Heart right ventricle (tissue), 16 donors: ENCODE measurements at regions of chrX and their contacts with region 1.

Region 1: DNA sequence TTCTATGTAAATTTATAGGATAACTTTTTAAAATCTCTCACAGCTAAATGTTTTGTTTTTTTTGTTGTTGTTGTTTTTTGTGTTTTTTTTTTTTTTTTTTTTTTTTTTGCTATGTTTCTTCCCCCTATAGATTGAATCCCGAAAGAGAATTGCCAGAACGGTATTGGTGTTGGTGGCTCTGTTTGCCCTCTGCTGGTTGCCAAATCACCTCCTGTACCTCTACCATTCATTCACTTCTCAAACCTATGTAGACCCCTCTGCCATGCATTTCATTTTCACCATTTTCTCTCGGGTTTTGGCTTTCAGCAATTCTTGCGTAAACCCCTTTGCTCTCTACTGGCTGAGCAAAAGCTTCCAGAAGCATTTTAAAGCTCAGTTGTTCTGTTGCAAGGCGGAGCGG is 4.1 kb downstream of the BRS3 start:
- DNase-seq: no peak
- ATAC-seq: no peak
- H3K4me3 ChIP-seq: no peak overlapping the region
- H3K27ac ChIP-seq: no peak overlapping the region
- H3K4me1 ChIP-seq: peaks cover 0 to 8% (median 3%) of the 10 kb centered on the region in 9 donors
- H3K27me3 ChIP-seq: peaks cover 0 to 56% (median 4%) of the 10 kb centered on the region in 7 donors
- CTCF ChIP-seq: no peak

Region 2: DNA sequence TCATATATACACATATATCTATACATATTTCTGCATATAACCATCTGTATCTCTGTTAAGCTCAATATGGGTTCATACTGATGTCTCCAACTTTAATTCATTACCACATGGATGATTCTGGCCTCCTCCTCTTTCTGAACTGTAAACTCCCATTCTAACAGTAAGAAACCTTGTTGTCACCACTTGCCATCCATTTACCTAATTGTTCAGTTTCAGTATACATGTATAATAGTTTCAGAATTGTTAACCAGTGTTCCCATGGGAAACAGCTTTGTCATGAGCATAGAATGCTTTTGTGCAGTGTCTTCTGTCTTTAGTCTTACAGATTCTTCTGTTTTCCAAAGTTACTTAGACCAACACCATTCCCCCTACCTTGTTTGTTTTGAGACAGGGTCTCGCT is 470.7 kb before region 1 on chrX:
- intact Hi-C with region 1: loop called in 1 of 10 experiments (anchors 5 kb)
- DNase-seq: no peak
- ATAC-seq: no peak
- H3K4me3 ChIP-seq: no peak overlapping the region
- H3K27ac ChIP-seq: no peak overlapping the region
- H3K4me1 ChIP-seq: no peaks in the 10 kb centered on the region
- H3K27me3 ChIP-seq: peaks cover 0 to 14% (median 0%) of the 10 kb centered on the region in 7 donors
- CTCF ChIP-seq: no peak

Region 3: DNA sequence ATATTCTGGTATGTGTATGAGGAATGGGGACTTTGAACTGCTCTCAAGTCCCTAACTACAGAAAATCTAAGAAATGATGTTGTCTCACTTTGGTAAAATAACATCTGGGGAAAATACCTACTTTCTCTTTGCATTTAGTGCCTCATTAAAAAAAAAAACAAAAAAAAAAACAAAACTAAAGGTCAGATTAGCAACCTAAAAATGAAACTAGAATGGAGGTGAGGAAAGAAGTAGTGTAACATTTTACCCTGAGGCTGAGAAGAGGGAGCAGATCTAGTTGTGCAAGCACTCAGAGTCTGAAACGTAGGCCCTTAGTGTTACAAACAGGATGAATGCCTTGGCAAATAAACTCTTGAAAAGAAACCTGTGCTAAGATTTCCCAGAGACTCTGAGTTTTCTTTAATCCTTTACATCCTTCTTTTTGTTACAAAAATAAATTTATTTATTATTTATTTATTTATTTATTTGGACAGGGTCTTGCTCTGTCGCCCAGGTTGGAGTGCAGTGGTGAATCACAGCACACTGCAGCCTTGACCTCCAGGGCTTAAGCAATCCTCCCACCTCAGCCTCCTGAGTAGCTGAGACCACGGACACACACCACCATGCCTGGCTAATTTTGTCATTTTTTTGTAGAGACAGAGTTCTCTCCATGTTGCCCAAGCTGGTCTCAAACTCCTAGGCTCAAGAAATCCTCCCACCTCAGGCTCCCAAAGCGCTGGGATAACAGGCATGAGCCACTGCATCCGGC is 96.4 kb after region 1 on chrX:
- intact Hi-C with region 1: no loop called
- DNase-seq: no peak
- ATAC-seq: no peak
- H3K4me3 ChIP-seq: no peak overlapping the region
- H3K27ac ChIP-seq: peak overlapping the region in 1 of 10 donors; percentile 26
- H3K4me1 ChIP-seq: peaks cover 0 to 8% (median 0%) of the 10 kb centered on the region in 9 donors
- H3K27me3 ChIP-seq: peaks cover 0 to 13% (median 0%) of the 10 kb centered on the region in 7 donors
- CTCF ChIP-seq: no peak

Region 4: DNA sequence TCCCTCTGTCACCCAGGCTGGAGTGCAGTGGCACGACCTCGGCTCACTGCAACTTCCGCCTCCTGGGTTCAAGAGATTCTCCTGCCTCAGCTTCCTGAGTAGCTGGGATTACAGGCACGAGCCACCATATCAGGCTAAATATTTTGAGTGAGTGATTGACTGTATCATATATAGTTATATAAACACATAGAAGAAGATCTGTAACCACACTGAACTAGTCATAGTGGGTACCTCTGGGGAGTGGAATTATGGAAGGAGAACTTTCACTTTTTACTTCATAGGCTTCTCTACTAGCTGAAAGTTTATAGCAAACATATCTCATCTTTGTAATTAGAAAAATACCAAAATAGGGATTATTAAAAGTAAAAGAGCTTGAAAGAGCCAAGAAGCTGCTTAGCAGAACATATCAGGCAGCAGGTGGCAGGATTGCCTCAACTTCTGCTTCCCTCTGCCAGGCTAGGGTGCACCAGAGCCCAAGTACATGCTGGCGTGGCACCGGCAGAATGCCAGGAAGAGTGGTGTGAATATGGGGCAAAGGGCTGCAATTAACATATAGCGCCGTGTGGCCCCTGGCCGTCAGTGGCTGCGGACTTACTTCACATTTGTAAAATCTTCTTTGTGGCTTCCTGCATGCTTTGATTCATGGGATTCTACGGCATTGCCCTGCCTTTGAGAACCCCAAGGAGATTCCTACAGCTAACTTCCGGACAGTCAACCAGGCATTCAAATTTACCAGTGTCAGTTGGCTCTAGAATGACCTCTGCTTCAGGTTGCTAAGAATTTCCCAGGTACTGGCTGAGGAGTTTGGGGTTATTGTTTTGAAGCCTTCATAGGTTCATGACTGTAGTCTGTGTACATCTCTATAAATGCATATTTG is 116.7 kb after region 1 on chrX:
- intact Hi-C with region 1: no loop called
- DNase-seq: peak; percentile 8 to 38
- ATAC-seq: peak in 1 of 8 donors; percentile 50
- H3K4me3 ChIP-seq: no peak overlapping the region
- H3K27ac ChIP-seq: no peak overlapping the region
- H3K4me1 ChIP-seq: no peaks in the 10 kb centered on the region
- H3K27me3 ChIP-seq: peaks cover 0 to 21% (median 0%) of the 10 kb centered on the region in 7 donors
- CTCF ChIP-seq: peak in 7 of 9 donors; percentile 7 to 50 (median 35)

Region 5: DNA sequence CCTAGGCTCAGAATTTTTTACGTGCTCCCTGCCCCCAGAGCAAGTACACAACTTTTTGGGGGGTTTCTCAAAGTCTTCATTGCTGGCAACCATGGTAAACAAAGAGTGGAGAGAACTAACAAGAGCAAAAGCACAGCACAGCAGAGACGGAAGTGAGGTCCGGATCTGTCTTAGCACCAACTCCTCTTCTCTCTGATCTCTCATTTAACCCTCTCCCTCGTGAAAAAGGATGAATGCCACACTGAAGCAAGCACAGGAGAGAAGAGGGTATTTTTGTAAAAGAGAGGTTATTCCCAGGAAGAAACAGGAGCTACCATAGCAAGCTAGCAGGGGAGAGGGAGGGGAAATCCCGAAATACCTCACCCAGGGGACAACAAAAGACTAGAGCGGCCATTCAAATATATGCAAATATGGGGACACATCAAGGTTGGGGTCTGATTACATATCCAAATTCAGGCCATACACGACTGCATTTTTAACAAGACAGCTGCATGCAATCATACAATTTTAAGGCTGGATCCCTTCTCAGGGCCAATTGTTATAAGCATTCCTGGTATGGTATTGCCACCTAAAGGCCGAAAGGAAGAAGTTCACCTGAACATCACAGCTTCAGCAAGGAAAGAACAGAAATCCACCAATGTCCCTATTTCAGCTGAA is 202.7 kb after region 1 on chrX:
- intact Hi-C with region 1: no loop called
- DNase-seq: no peak
- ATAC-seq: peak in 1 of 8 donors; percentile 28
- H3K4me3 ChIP-seq: no peak overlapping the region
- H3K27ac ChIP-seq: peak overlapping the region in 1 of 10 donors; percentile 27
- H3K4me1 ChIP-seq: no peaks in the 10 kb centered on the region
- H3K27me3 ChIP-seq: peaks cover 0 to 21% (median 0%) of the 10 kb centered on the region in 7 donors
- CTCF ChIP-seq: peak; percentile 8 to 63 (median 49)